ENCODE measurements at regions of chr4 and their contacts with region 1.

Region 1: GRCh38 chr4:168917138-168917779 is 92.8 kb downstream of the CBR4 start:
- DNase-seq: peak; percentile 14
- ATAC-seq: no peak
- H3K4me3 ChIP-seq: no peak overlapping the region
- H3K27ac ChIP-seq: no peak overlapping the region
- H3K4me1 ChIP-seq: peaks cover 14% of the 10 kb centered on the region
- H3K27me3 ChIP-seq: no peaks in the 10 kb centered on the region
- CTCF ChIP-seq: peak; percentile 48
- EP300 ChIP-seq: no peak
- POLR2A ChIP-seq: no peak
- RAD21 ChIP-seq: no peak

Region 2: DNA sequence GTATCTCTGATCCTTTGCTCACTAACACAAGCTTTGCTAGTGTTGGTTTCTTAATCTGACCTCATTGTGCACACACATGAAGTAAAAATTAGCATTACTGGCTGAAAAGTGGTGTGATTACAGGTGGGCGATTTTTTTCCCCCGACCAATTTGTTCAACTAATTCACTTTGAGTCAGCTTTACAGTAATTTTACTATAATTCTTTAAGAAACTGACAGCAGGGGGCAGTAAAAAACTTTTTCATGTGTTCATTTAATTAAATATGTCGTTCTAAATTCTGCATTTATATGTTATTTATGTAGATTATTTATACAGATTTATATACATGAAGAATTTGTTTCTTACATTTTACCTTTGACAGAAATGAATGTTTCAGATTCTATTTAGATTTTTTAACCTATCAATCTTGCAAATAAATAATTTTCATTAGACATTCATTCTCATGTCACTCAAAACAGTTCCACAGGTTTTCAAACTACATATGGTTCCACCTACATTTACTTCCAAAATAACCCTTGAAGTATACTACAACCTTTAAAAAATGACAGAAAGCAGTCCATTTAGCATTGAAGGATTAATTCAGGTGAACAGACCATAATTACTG is 402.9 kb before region 1 on chr4:
- CTCF ChIA-PET with region 1: no interaction called
- POLR2A ChIA-PET with region 1: no interaction called
- in situ Hi-C with region 1: no loop called
- intact Hi-C with region 1: loop called (anchors 1 kb)
- DNase-seq: peak; percentile 5
- ATAC-seq: no peak
- H3K4me3 ChIP-seq: no peak overlapping the region
- H3K27ac ChIP-seq: no peak overlapping the region
- H3K4me1 ChIP-seq: no peaks in the 10 kb centered on the region
- H3K27me3 ChIP-seq: no peaks in the 10 kb centered on the region
- CTCF ChIP-seq: 0 out of 2 replicates have a peak, but pooled peaks have one; percentile 13
- EP300 ChIP-seq: no peak
- POLR2A ChIP-seq: no peak
- RAD21 ChIP-seq: no peak

Region 3: DNA sequence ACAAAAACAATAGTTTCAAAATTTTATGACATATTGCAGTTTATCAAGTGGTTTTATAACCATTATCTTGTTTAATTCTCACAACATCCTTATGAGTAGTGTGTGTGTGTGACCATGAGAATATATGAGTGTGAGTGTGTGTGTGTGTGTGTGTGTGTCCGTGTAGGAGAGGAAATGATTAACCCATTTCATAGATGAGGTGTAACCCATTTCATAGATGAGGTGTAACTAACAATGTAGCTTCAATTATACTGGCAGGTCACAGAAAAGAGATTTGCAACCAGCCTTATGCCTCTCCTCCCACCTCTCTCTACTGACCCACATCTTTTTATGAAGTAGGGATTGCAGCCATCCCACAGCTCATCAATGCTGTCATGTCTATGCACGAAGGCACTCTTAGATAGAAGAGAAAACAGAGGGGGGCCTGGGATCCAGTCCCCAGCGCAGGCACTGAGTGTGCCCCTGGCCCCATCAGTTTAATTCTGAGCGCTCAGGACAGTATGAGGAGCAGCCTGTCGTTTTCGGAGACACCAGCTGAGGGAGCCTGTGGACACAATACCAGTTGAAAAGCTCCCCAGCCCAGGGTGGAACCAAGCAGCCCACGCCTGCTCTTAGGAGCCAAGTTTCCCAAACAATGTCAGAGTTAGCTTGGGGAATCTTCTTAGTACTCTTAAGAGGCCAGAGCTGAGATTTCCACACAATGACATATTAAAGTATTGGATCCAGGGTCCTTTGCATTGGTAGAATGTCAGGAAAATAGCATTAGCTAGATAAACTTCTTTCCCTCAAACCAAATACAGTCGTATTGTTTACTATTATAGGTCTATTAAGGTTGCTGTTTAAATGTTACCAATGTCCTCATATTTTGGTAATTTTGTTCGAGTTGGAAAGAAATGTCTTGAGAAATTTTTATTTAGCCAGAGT is 331.8 kb before region 1 on chr4:
- CTCF ChIA-PET with region 1: interaction called, 6 read pairs
- POLR2A ChIA-PET with region 1: no interaction called
- in situ Hi-C with region 1: loop called (anchors 25 kb)
- intact Hi-C with region 1: loop called (anchors 1 kb)
- DNase-seq: peak; percentile 20
- ATAC-seq: peak; percentile 100
- H3K4me3 ChIP-seq: no peak overlapping the region
- H3K27ac ChIP-seq: no peak overlapping the region
- H3K4me1 ChIP-seq: no peaks in the 10 kb centered on the region
- H3K27me3 ChIP-seq: peaks cover 0 to 3% of the 10 kb centered on the region in 2 experiments; a peak in 1 of 5 replicates
- CTCF ChIP-seq: peak; percentile 65
- EP300 ChIP-seq: no peak
- POLR2A ChIP-seq: no peak
- RAD21 ChIP-seq: peak; percentile 46; the same call in 1 of the 2 replicates

Region 4: DNA sequence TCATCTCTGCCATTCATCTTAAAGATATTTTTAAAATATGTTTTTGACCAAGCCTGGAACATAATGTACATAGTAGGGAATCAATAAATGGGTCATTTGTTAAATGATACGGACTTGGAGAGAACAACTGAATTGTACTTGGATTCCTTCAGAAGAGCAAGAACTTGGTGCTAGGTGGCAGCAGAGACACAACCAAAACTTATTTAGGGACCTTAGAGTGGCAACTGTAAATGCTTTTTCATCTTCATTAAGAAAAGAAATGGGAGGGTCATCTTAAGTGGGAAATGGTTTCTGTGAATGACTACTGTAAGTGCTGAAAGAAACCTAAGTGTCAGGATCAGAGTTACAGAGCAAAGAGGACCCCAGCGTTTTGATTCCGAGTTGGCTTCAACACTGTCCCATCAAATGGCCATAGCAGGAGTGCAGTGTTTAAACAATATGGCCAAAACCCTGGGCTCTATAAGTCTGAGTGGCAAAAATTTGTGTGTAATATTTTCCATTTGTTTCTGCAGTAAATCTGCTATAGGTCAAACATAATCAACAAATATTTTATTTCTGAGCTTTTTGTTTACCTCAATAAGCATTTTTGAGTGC is 206.8 kb before region 1 on chr4:
- CTCF ChIA-PET with region 1: interaction called, 14 read pairs
- POLR2A ChIA-PET with region 1: no interaction called
- in situ Hi-C with region 1: loop called (anchors 10 kb)
- intact Hi-C with region 1: loop called (anchors 1 kb)
- DNase-seq: peak; percentile 18
- ATAC-seq: peak; percentile 57; the same call in 2 of the 3 replicates
- H3K4me3 ChIP-seq: no peak overlapping the region
- H3K27ac ChIP-seq: no peak overlapping the region
- H3K4me1 ChIP-seq: no peaks in the 10 kb centered on the region
- H3K27me3 ChIP-seq: 0 out of 5 replicates have a peak, but pooled peaks cover 0 to 3% of the 10 kb centered on the region in 2 experiments
- CTCF ChIP-seq: peak; percentile 52
- EP300 ChIP-seq: no peak
- POLR2A ChIP-seq: no peak
- RAD21 ChIP-seq: 0 out of 2 replicates have a peak, but pooled peaks have one; percentile 16

Region 5: DNA sequence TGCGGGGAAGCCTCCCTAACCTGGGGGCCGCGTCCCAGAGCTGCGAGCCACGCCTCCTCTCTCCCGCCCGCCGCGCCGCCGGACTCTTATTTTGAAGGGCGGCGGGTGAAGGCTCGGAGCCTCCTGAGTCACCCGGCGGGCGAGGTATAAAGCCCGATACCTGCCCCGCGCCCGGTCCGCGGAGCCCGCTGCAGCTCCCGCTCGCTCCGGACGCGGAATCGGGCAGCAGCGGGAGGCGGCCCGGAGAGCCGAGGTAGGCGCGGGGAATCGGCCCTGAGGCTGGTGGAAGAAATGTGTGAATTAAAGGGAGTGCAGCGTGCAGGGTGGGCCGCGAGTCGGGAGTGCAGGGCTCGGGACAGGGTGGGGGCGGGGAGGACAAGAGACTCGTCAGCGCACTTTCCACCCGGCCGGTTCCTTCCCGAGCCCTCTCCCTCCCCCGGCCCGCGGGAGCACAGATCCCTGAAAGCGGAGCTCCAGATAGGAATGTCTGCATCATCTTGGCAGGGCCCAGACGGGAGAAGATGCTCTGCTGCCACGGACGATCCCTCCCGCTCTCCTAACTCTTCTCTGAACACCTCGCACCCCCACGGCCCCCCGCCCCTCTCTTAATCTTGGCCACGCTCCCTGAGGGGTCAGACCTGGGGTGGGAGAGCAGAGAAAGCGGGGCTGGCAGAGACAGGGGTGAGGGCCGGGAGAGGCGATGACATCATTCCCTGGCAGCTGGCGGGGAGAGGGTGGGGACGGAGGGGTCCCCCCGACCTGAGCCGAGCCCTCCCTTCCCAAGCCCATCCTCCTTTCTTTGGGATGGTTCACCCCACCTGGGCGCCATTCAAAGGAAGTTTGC is 85.1 kb before region 1 on chr4:
- CTCF ChIA-PET with region 1: no interaction called
- POLR2A ChIA-PET with region 1: no interaction called
- in situ Hi-C with region 1: no loop called
- intact Hi-C with region 1: loop called (anchors 5 kb)
- DNase-seq: peak; percentile 23
- ATAC-seq: peak; percentile 90
- H3K4me3 ChIP-seq: peak overlapping the region; percentile 32 to 68 (median 55)
- H3K27ac ChIP-seq: no peak overlapping the region
- H3K4me1 ChIP-seq: peaks cover 14% of the 10 kb centered on the region; the same call in 1 of the 2 replicates
- H3K27me3 ChIP-seq: peaks cover 3 to 37% of the 10 kb centered on the region in 2 experiments; a peak in 3 of 5 replicates
- CTCF ChIP-seq: no peak
- EP300 ChIP-seq: no peak
- POLR2A ChIP-seq: no peak
- RAD21 ChIP-seq: no peak; the same call in 1 of the 2 replicates

Measured in HepG2 (cell line).